A673 (cell line): ENCODE measurements at regions of chr7 and their contacts with region 1.

Region 1: DNA sequence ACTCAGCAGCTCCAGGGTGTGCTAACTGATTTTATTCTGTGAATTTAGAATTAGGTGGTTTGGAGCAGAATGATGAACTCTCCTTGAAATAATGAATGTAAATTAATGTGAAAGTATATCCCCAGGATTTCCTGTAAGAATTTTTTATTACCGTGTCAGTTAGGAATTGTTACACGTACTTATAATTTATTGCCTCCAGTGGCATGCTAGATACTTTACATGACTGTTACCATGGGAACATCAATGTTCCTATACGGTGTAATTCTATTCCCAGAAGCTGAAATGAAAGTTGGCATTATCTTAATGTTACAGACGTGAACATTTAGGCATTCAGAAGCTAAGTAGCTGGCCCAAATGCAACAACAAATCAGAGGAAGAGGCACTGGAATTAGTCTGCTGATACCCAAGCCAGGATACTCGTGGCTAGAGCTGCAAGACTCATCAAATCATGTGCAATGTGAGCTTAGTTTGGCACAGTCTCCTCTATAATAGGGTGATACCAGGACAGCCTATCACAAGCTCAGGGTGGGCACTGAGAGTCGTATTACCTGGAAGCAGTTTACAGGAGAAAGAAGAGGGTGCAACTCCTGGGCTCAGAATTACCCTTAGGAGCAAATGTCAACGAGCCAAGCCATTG is 30.0 kb upstream of the PRKAR2B start:
- DNase-seq: peak; percentile 67
- H3K4me3 ChIP-seq: peak overlapping the region; percentile 8
- H3K27ac ChIP-seq: peak overlapping the region; percentile 73
- H3K4me1 ChIP-seq: peaks cover 19% of the 10 kb centered on the region
- H3K27me3 ChIP-seq: no peaks in the 10 kb centered on the region
- CTCF ChIP-seq: no peak

Region 2: GRCh38 chr7:106313456-106313901 is 701.0 kb before region 1 on chr7:
- CTCF ChIA-PET with region 1: no interaction called
- POLR2A ChIA-PET with region 1: no interaction called
- intact Hi-C with region 1: no loop called
- DNase-seq: no peak
- H3K4me3 ChIP-seq: no peak overlapping the region
- H3K27ac ChIP-seq: no peak overlapping the region
- H3K4me1 ChIP-seq: no peaks in the 10 kb centered on the region
- H3K27me3 ChIP-seq: no peaks in the 10 kb centered on the region
- CTCF ChIP-seq: no peak

Region 3: DNA sequence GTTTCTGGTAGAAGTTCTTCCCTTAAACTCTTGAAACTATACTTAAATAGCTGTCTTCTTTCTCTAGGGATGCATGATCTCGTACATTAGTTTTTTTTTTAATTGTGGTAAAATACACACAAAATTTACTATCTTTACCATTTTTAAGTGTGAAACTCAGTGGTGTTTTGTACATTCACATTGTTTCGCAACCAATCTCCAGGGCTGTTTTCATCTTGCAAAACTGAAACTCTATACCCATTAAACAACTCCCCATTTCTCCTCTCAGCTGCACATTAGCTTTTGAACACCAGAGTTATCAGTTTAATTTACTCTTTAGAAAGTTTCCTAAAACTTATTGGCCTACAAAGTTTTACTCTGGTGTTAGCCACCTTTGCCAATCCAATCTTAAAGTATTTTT is 15.5 kb before region 1 on chr7:
- CTCF ChIA-PET with region 1: no interaction called
- POLR2A ChIA-PET with region 1: no interaction called
- intact Hi-C with region 1: no loop called
- DNase-seq: no peak
- H3K4me3 ChIP-seq: no peak overlapping the region
- H3K27ac ChIP-seq: no peak overlapping the region
- H3K4me1 ChIP-seq: no peaks in the 10 kb centered on the region
- H3K27me3 ChIP-seq: no peaks in the 10 kb centered on the region
- CTCF ChIP-seq: no peak

Region 4: DNA sequence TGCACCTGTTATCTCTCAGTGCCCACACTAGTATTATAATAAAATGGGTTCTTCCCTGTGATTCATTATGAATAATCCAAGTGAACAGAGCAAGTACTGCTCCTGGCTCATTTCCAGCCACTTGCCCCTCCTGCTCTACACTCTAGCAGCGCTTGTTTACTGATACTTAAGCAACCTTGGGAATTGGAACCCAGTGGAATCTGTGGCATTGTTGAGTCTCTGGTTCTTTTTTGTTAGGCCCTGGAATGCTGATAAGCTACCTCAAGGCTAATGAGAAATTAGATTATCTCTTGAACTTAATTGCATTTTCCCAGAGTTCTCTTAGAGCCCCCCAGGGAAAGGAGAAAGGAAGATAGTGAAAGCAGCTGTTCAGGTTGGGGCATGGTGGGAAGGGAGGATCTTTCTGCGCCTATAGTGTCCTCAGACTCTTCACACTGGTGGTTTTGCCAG is 64.0 kb after region 1 on chr7:
- CTCF ChIA-PET with region 1: no interaction called
- POLR2A ChIA-PET with region 1: no interaction called
- intact Hi-C with region 1: loop called (anchors 10 kb)
- DNase-seq: peak; percentile 4
- H3K4me3 ChIP-seq: no peak overlapping the region
- H3K27ac ChIP-seq: no peak overlapping the region
- H3K4me1 ChIP-seq: no peaks in the 10 kb centered on the region
- H3K27me3 ChIP-seq: no peaks in the 10 kb centered on the region
- CTCF ChIP-seq: no peak